Right cardiac atrium (tissue), 5 donors: ENCODE measurements at regions of chr3 and their contacts with region 1.

Region 1: GRCh38 chr3:123021996-123022510 is 5.5 kb downstream of the SEMA5B start:
- DNase-seq: no peak
- ATAC-seq: no peak
- H3K4me3 ChIP-seq: no peak overlapping the region
- H3K27ac ChIP-seq: no peak overlapping the region
- H3K4me1 ChIP-seq: no peaks in the 10 kb centered on the region
- H3K27me3 ChIP-seq: no peaks in the 10 kb centered on the region

Region 2: GRCh38 chr3:122948408-122948807 is 73.6 kb before region 1 on chr3:
- intact Hi-C with region 1: loop called (anchors 2 to 5 kb)
- DNase-seq: peak in 1 of 3 donors; percentile 60
- ATAC-seq: peak; percentile 48 to 57
- H3K4me3 ChIP-seq: no peak overlapping the region
- H3K27ac ChIP-seq: no peak overlapping the region
- H3K4me1 ChIP-seq: peaks cover 2% of the 10 kb centered on the region
- H3K27me3 ChIP-seq: no peaks in the 10 kb centered on the region